Endothelial cell of umbilical vein (primary cell): ENCODE measurements at regions of chr3 and their contacts with region 1.

Region 1: DNA sequence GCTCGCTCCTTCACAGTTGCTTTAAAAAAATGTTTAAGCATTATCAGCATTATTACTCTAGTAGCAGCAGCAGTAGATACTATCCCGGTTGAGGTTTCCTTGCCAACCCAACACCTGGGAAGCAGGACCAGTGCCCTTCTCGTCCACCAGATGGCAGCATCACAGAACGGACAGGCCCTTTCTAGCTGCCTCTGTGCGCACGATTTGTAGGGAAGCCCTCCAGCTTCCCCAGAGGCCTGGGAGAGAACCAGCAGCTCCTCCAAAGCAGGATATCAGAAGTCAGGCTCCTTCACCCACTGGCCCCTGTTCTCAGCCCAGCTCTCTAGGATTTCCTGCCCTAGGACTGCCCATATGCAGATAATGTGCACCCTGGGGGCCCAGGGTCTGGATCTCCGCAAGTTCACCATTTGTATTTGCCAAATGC is 16.8 kb upstream of the ESYT3 start:
- DNase-seq: peak; percentile 64
- H3K4me3 ChIP-seq: no peak overlapping the region
- H3K27ac ChIP-seq: no peak overlapping the region
- H3K4me1 ChIP-seq: no peaks in the 10 kb centered on the region
- H3K27me3 ChIP-seq: peaks cover 0 to 5% of the 10 kb centered on the region in 2 experiments
- CTCF ChIP-seq: peak; percentile 89 to 92
- POLR2A ChIP-seq: no peak

Region 2: DNA sequence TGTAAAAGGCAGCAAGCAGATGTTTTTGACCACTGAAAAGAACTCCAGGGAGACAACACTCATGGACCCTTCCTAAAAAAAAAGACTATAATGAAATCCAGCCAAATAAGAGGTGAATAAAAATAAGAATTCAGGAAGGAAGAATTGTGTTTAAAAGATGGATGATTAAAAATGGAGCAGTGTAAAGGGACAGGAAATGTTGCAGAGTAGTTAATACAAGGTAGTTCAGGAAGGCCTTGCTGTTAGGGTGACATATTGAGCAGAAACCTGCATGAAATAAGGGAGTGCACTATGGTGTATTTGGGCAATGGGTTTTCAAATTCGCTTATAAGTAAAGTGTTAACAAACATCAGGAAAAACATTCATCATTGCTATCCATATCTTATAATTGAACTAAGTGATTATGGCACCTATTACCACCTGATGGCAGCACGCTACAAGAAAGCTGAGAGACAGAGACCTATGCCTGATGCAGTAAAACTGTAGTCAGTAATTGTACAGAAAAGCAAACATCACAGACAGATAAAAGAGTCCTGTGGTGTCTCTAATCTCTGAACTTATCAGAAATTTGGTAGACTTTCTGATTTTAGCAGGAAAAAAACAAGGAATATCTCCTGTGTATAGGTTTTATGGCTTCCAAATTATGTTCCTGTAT is 237.1 kb before region 1 on chr3:
- CTCF ChIA-PET with region 1: interaction called, 5 read pairs
- POLR2A ChIA-PET with region 1: no interaction called
- dilution Hi-C with region 1: no loop called
- intact Hi-C with region 1: loop called (anchors 5 kb)
- DNase-seq: peak; percentile 50
- H3K4me3 ChIP-seq: no peak overlapping the region
- H3K27ac ChIP-seq: no peak overlapping the region
- H3K4me1 ChIP-seq: no peaks in the 10 kb centered on the region
- H3K27me3 ChIP-seq: peaks cover 7 to 13% of the 10 kb centered on the region in 2 experiments
- CTCF ChIP-seq: peak; percentile 19 to 21
- POLR2A ChIP-seq: no peak

Region 3: DNA sequence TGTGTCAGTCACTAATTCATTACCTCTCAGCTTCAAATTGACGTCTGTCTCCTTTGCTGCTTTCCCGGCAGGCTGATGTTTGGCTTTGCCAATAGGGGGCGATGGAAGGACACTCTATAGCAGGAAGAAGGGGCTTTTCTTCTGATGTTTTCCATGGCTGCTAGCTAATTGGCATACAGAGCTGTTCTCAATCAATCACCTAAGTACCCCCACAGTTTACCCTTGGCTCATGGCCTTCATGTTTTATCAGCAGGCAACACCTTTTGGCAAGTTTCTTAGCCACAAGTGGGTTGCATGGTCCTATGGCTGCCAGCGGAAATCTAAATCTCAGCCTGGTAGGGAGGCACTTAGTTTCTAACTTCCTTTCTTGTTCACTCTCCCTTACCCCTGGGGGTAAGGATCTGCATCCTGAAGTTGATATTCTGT is 61.9 kb after region 1 on chr3:
- CTCF ChIA-PET with region 1: interaction called, 9 read pairs
- POLR2A ChIA-PET with region 1: no interaction called
- dilution Hi-C with region 1: no loop called
- intact Hi-C with region 1: loop called (anchors 1 kb)
- DNase-seq: peak; percentile 55
- H3K4me3 ChIP-seq: no peak overlapping the region
- H3K27ac ChIP-seq: no peak overlapping the region
- H3K4me1 ChIP-seq: no peaks in the 10 kb centered on the region
- H3K27me3 ChIP-seq: no peaks in the 10 kb centered on the region
- CTCF ChIP-seq: peak; percentile 79 to 87
- POLR2A ChIP-seq: no peak

Region 4: GRCh38 chr3:138974462-138974861 is 556.9 kb after region 1 on chr3:
- CTCF ChIA-PET with region 1: interaction called, 18 read pairs
- POLR2A ChIA-PET with region 1: no interaction called
- dilution Hi-C with region 1: no loop called
- intact Hi-C with region 1: loop called (anchors 2 kb)
- DNase-seq: peak; percentile 16
- H3K4me3 ChIP-seq: no peak overlapping the region
- H3K27ac ChIP-seq: no peak overlapping the region
- H3K4me1 ChIP-seq: no peaks in the 10 kb centered on the region
- H3K27me3 ChIP-seq: peaks cover 0 to 2% of the 10 kb centered on the region in 2 experiments
- CTCF ChIP-seq: no peak
- POLR2A ChIP-seq: no peak